ENCODE measurements at regions of chr20 and their contacts with region 1.

Region 1: DNA sequence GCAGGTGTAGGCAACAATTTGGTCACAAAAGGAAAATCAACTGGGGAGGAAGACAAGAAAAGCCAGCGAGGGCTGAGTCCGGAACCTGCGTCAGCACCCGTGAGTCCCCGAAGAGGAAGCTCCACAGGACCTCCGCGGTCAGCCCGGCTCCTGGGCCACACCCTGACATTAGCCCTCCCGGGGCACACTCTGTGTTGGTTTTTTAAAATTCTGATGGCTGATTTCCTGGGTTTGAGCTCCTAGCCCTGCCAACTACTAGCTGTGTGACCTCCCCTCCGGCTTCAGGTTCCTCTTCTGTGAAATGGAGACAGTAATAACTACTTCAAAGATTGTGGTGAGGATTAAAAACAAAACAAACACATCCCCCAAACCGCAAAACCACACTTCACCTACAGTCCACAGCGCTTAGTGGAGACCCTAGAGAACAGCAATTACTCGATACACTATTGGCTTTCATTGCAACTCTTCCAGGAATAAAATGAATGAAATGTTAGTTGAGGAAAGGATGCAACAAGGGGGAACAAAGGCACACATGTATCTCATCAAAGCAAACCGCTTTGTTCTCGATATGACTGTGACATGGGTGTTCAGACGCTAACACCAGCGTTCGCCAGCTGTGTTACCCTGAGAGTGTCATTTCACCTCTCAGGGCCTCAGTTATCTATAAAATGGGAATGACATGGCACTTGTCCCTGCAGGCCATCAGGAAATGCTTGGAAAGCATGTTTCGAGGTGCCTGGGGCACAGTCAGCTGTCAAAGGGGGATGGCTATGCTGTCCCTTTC is 983 bp downstream of the ZBP1 start:
- DNase-seq: peak; percentile 92
- H3K4me3 Mint-ChIP-seq: peak overlapping the region; percentile 78
- H3K27ac Mint-ChIP-seq: peak overlapping the region; percentile 87
- H3K4me1 Mint-ChIP-seq: peaks cover 54% of the 10 kb centered on the region
- H3K27me3 Mint-ChIP-seq: peaks cover 16% of the 10 kb centered on the region

Region 2: DNA sequence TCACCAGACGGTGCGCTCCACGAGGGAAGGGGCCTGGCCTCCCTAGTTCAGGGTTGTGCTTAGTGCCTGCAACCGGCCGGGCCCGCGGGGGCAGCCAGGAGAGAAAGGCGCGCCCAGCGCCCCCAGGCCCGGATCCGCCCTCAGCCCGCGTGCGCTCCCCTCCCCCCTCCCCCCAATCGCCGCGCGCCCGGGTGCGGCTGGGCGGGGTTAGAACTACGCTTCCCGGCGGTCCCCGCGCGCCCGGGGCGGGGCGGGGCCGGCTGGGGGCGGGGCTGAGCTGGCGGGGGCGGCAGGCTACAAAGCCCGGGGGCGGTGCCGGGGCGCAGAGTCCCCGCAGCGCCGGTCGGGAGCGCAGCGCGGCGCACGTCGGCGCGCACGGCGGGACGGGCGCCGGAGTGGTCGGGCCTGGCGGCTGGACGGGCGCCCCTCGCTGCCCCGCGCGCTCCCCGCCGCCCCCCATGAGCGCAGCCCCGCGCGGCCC is 228.1 kb before region 1 on chr20 and contains the start of gene RBM38:
- intact Hi-C with region 1: loop called (anchors 2 kb)
- DNase-seq: peak; percentile 93
- H3K4me3 Mint-ChIP-seq: peak within 1 kb of the TSS; percentile 88
- H3K27ac Mint-ChIP-seq: peak within 1 kb of the TSS; percentile 98
- H3K4me1 Mint-ChIP-seq: peaks cover 33% of the 10 kb centered on the region
- H3K27me3 Mint-ChIP-seq: no peaks in the 10 kb centered on the region
- total RNA-seq, gene RBM38: 100 and 103 TPM in 2 replicates

Region 3: GRCh38 chr20:57633945-57634491 is 14.8 kb after region 1 on chr20:
- intact Hi-C with region 1: loop called (anchors 2 kb)
- DNase-seq: peak; percentile 83
- H3K4me3 Mint-ChIP-seq: peak overlapping the region; percentile 16
- H3K27ac Mint-ChIP-seq: peak overlapping the region; percentile 46
- H3K4me1 Mint-ChIP-seq: peaks cover 32% of the 10 kb centered on the region
- H3K27me3 Mint-ChIP-seq: peaks cover 82% of the 10 kb centered on the region

Region 4: DNA sequence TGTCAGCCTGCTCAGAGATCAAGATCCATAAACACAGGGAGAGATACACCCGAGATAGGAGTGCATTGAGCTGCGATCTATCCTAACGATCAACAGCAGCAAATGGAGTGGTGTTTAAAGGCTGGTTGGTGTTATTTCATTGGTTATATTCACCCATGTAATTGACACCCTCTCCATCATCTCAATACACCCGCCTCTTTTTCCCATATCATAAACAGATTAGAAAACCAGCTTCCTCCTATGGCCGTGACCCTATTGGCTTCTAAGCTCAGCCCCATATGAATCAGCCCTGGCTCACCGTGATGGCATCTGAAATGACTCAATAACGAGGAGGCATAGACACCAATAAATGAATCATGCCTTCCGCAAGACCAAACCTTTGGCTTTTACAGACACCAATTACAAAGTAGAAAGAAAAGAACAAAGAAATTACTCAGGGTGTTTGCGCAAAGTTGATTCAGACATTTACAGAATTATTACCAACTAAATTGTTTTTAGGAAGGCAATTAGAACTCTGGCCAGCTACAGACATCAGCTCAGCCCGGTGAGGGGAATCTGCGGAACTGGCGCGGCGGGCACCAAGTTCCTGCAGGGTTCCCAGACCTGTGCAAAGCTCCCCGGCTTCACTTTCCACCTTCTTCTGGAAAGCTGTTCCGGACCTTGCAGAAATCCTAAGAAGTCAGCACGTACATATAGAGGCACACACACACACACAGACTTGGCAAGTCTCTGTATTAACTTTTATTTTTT is 79.0 kb after region 1 on chr20:
- intact Hi-C with region 1: loop called (anchors 2 kb)
- DNase-seq: peak; percentile 72
- H3K4me3 Mint-ChIP-seq: peak overlapping the region; percentile 32
- H3K27ac Mint-ChIP-seq: peak overlapping the region; percentile 44
- H3K4me1 Mint-ChIP-seq: peaks cover 9% of the 10 kb centered on the region
- H3K27me3 Mint-ChIP-seq: peaks cover 9% of the 10 kb centered on the region

Region 5: DNA sequence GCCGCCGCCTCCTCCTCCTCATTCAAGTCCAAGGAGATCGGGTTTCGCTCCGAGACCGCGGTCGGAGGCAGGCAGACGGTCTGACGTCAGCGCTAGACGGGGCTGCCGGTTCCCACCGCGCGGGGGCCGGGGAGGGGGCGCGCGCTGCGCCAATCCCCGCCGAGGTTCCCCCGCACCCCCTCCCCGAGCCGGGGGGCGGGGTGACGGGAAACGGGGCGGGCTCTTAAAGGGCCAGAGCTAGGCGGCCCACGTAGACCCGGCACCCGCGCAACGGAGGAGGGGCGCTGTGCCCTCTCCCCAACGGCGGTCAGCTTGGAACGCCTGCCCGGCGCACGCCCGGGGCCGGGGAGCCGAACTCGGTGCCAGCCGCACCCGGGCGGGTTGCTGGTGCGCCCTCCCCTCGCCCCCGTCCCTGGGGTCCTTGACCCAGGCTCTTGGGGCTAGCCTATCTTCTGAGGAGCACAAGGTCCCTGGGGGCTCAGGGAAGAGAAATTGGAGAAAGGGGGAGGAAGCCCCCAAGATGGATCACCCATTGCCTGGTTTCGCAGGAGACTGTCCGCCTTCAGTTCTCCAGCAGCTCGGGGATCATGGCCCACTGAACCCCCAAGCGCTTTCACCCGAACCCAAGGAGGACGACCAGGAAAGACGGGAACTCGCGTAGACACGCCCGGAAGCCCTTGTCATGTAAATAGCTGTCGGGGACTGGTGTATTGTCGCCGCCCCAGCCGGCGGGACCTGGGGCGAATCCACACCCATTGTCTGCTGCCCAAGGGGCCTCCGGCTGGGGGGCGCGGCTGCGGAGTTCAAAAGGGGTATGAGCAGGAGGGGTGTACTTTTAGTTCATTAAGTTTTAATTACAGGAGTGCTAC is 90.9 kb after region 1 on chr20 and contains the start of gene PMEPA1:
- intact Hi-C with region 1: loop called (anchors 5 kb)
- DNase-seq: peak; percentile 96
- H3K4me3 Mint-ChIP-seq: peak within 1 kb of the TSS; percentile 80
- H3K27ac Mint-ChIP-seq: peak within 1 kb of the TSS; percentile 29
- H3K4me1 Mint-ChIP-seq: peaks cover 16% of the 10 kb centered on the region
- H3K27me3 Mint-ChIP-seq: peaks cover 46% of the 10 kb centered on the region
- total RNA-seq, gene PMEPA1: 0.66 and 0.82 TPM in 2 replicates

Measured in activated CD4-positive, alpha-beta T cell treated with anti-CD3 and anti-CD28 coated beads, Interleukin-2, amount 10 ng/mL, durations not matched to agents 24 days and 14 days (primary cell).